ENCODE measurements at regions of chr2 and their contacts with region 1.

Region 1: DNA sequence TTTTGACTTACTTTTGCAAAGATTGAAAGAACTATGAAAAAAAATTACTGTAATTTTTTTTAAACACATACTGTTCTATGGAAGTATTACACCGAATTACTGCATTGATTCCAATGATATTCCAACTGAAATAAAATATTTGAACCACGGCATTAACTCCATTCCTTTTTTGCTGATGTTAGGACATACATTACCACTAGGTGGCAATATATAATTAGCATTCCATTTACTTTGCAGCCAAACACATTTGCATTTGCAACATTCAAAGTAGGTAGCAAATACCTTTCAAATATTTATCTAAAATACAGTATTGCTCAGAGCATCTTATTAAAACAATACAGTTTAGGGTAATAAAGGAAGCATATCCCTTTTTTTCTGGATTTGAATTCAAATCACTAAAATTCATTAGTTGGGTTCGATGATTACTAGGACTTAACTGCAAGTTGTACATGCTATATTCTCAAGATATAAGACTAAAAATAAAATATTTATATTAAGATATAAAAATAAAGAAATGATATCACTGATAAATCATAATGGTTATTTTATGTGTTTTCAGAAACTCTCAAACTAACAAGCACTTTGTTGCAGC is 31.3 kb downstream of the LANCL1 start:
- DNase-seq: peak in 1 of 2 experiments; percentile 5
- H3K4me3 ChIP-seq: no peak overlapping the region
- H3K4me3 Mint-ChIP-seq: no peak overlapping the region
- H3K27ac Mint-ChIP-seq: no peak overlapping the region
- H3K4me1 ChIP-seq: no peaks in the 10 kb centered on the region
- H3K4me1 Mint-ChIP-seq: no peaks in the 10 kb centered on the region
- H3K27me3 ChIP-seq: no peaks in the 10 kb centered on the region
- H3K27me3 Mint-ChIP-seq: no peaks in the 10 kb centered on the region
- CTCF ChIP-seq: peak; percentile 48 to 57

Region 2: GRCh38 chr2:210476194-210477128 is 31.2 kb after region 1 on chr2 and contains the start of gene LANCL1:
- CTCF ChIA-PET with region 1: no interaction called
- POLR2A ChIA-PET with region 1: no interaction called
- intact Hi-C with region 1: loop called (anchors 2 kb)
- DNase-seq: peak; percentile 89
- H3K4me3 ChIP-seq: peak within 1 kb of the TSS; percentile 67
- H3K4me3 Mint-ChIP-seq: peak within 1 kb of the TSS; percentile 95
- H3K27ac Mint-ChIP-seq: peak within 1 kb of the TSS; percentile 86
- H3K4me1 ChIP-seq: no peaks in the 10 kb centered on the region; the same call in 1 of the 2 replicates
- H3K4me1 Mint-ChIP-seq: no peaks in the 10 kb centered on the region
- H3K27me3 ChIP-seq: no peaks in the 10 kb centered on the region
- H3K27me3 Mint-ChIP-seq: no peaks in the 10 kb centered on the region
- CTCF ChIP-seq: no peak
- total RNA-seq, gene LANCL1: 26.5 and 30.6 TPM in 2 replicates